ENCODE measurements at regions of chr3 and their contacts with region 1.

Region 1: GRCh38 chr3:135895106-135895733 is 70.3 kb upstream of the PPP2R3A start:
- DNase-seq: peak; percentile 39
- H3K4me3 ChIP-seq: no peak overlapping the region
- H3K27ac ChIP-seq: no peak overlapping the region
- H3K27me3 ChIP-seq: no peaks in the 10 kb centered on the region
- CTCF ChIP-seq: peak; percentile 97

Region 2: DNA sequence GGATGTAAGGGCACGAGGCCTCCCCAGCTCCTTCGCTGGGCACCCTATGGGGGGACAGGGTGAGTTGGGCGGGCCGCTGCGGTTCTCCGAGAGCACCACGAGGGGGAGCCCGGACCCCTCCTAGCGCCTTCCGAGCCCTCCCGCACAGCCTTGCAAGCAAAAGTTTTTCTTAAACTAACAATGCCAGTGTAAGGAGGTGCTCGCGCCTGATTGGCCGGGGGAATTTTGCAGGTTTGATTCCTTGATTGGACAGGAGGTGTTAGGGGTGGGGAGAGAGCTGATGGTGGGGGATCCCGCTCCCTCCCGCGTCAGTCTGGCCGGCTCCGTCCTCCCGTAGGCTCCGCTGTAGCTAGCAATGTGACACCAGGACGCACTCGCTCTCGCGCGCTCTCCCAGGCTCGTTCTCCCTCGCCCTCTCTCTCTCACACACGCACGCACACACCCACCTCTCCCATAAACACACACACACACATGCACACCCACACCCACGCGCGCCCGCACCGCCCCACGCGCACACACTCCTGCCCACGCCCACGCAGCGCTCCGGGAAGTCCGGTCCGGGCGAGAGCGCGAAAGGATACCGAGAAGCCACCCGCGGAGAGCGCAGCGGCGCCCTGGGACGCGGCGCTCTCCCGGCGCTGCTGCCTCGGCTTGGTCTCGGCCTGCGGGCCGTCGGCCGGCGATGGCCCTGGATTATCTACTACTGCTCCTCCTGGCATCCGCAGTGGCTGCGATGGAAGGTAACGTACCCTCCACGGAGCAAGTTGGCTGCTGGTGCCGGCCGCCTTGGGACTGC is 1100.1 kb before region 1 on chr3 and contains the start of gene EPHB1:
- CTCF ChIA-PET with region 1: interaction called, 32 read pairs
- POLR2A ChIA-PET with region 1: no interaction called
- DNase-seq: peak; percentile 63
- H3K4me3 ChIP-seq: peak within 1 kb of the TSS; percentile 57
- H3K27ac ChIP-seq: no peak within 1 kb of the TSS
- H3K27me3 ChIP-seq: peaks cover 57% of the 10 kb centered on the region
- CTCF ChIP-seq: peak; percentile 91
- polyA plus RNA-seq, gene EPHB1: 0.07 and 0.11 TPM in 2 replicates

Region 3: DNA sequence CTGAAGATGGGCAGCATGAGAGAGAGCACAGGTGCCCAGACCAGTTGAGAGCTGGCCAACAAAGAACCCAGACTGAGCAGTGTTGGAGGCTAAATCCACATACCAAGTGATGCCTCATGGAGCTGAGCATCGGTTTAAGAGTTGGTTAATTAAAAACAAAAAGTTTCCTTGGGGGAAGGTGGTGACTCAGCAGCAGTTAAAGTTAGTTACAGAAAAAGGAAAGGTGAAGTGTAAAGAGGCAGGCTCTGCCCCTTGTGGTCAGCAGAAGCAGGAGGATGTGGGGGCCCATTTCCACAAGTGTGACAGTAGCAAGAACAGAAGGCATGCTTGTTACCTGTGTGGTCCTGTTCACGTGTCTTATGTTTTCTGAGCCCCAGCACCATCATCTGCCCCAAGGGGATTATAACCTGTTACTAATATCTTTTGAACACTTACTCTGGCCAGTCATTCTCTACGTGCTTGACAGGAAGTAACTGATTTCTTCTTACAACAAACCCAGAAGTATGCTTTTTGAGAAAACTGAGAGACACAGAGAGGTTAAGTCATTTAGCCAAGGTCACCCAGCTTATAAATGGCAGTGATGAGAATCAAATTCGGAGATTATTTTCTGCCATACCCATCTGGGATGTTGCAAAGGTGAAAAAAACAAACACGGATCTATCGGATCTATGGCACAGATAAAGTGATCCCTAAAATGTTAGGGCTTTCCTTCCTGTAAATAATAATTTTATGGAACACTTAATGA is 1009.2 kb before region 1 on chr3:
- CTCF ChIA-PET with region 1: no interaction called
- POLR2A ChIA-PET with region 1: no interaction called
- DNase-seq: no peak
- H3K4me3 ChIP-seq: no peak overlapping the region
- H3K27ac ChIP-seq: no peak overlapping the region
- H3K27me3 ChIP-seq: no peaks in the 10 kb centered on the region
- CTCF ChIP-seq: no peak

Region 4: GRCh38 chr3:135736740-135737139 is 158.5 kb before region 1 on chr3:
- CTCF ChIA-PET with region 1: interaction called, 14 read pairs
- POLR2A ChIA-PET with region 1: no interaction called
- DNase-seq: no peak
- H3K4me3 ChIP-seq: no peak overlapping the region
- H3K27ac ChIP-seq: no peak overlapping the region
- H3K27me3 ChIP-seq: no peaks in the 10 kb centered on the region
- CTCF ChIP-seq: peak; percentile 35; the same call in 1 of the 2 replicates

Region 5: DNA sequence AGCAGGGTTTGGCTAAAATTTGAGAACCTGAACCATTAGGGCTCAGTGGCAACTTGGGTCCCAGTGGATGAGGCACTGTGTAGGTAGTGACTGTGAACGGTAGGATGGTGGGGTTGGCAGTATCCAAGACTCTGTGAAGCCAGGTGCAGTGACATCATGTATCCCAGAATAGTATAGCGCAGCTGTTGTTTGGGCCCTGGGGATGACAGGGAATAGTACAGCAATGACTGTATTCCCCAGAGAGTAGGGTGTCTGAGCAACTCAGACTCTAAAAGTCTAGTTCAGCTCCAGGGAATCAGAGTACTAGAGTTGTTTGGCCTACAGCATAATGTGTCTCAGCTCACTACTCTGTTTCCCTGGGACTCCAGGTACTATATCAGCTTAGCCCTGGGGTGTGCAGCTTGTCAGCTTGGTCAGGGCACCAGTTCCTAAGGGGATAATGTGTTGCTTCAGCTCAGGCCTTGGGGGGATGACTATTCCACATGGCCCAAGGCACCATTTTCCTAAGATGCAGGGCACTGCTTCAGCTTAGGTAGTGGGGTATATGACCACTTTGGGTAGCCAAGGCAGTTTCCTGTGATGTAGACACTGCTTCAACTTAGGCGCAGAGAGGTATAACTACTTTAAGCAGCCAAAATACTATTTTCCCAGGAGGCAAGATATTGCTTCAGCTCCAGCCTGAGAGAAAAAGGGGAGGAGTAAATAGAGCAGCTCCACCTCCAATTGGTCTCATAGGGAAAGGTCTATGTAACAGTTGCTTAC is 49.8 kb after region 1 on chr3:
- CTCF ChIA-PET with region 1: no interaction called
- POLR2A ChIA-PET with region 1: no interaction called
- DNase-seq: no peak
- H3K4me3 ChIP-seq: no peak overlapping the region
- H3K27ac ChIP-seq: no peak overlapping the region
- H3K27me3 ChIP-seq: no peaks in the 10 kb centered on the region
- CTCF ChIP-seq: no peak

Measured in AG04450 (cell line).